Activated CD4-positive, alpha-beta T cell treated with anti-CD3 and anti-CD28 coated beads, Interleukin-2, amount 10 ng/mL, durations not matched to agents 24 days and 14 days (primary cell): ENCODE measurements at regions of chr4 and their contacts with region 1.

Region 1: DNA sequence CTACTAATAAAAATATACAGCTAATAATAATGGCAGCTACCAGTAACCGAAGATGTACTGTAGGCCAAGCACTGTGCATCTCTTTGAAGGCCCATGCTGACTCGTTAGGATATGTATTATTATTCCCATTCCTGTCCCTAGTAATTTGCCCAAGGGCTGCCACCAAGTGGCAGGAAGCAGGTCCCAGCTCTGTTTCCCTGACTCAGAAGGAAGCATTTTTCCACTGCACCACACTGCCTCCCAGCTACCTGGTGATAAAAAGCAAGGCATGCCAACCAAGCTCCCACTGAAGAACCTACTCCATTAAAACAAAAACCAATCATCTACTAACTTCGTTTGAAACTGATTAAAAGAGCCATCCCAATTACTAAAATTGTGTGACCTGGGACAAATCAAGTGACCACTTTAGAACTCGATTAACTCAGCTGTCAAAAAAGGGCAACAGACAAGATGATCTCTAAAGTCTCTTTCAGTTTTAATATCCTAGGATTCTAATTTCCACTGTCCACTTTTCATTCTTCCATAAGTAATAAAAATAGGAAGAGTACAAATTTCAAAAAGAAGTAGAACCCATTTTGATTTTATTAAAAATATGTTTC is 24.3 kb upstream of the PGM2 start:
- DNase-seq: no peak
- H3K4me3 Mint-ChIP-seq: no peak overlapping the region
- H3K27ac Mint-ChIP-seq: no peak overlapping the region
- H3K4me1 Mint-ChIP-seq: no peaks in the 10 kb centered on the region
- H3K27me3 Mint-ChIP-seq: peaks cover 18% of the 10 kb centered on the region

Region 2: GRCh38 chr4:37812710-37813109 is 10.5 kb after region 1 on chr4:
- intact Hi-C with region 1: no loop called
- DNase-seq: no peak
- H3K4me3 Mint-ChIP-seq: no peak overlapping the region
- H3K27ac Mint-ChIP-seq: no peak overlapping the region
- H3K4me1 Mint-ChIP-seq: peaks cover 15% of the 10 kb centered on the region
- H3K27me3 Mint-ChIP-seq: peaks cover 16% of the 10 kb centered on the region

Region 3: GRCh38 chr4:38034986-38035882 is 233.1 kb after region 1 on chr4:
- intact Hi-C with region 1: loop called (anchors 1 kb)
- DNase-seq: peak; percentile 82
- H3K4me3 Mint-ChIP-seq: no peak overlapping the region
- H3K27ac Mint-ChIP-seq: no peak overlapping the region
- H3K4me1 Mint-ChIP-seq: no peaks in the 10 kb centered on the region
- H3K27me3 Mint-ChIP-seq: no peaks in the 10 kb centered on the region

Region 4: DNA sequence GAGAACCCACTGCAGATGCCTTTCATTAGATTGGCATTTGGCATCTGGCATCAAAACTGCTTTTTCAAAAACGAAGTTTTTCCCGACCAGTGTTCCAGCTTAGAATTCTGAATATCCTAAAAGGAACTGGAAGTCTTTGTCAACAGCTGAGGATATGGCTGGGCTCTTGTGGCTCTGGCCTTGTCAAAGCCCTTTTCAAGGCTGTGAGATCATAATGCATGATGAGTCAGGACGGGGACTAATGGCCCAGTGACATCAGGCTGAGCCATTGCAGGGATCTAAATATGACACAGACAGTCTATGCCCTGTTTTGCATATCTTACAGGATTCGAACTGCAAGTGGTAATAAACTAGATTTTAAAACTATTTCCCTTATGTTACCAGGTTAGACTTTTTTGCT is 464.4 kb after region 1 on chr4:
- intact Hi-C with region 1: no loop called
- DNase-seq: peak; percentile 38
- H3K4me3 Mint-ChIP-seq: no peak overlapping the region
- H3K27ac Mint-ChIP-seq: no peak overlapping the region
- H3K4me1 Mint-ChIP-seq: no peaks in the 10 kb centered on the region
- H3K27me3 Mint-ChIP-seq: peaks cover 12% of the 10 kb centered on the region